AG04450 (cell line): ENCODE measurements at regions of chr5 and their contacts with region 1.

Region 1: DNA sequence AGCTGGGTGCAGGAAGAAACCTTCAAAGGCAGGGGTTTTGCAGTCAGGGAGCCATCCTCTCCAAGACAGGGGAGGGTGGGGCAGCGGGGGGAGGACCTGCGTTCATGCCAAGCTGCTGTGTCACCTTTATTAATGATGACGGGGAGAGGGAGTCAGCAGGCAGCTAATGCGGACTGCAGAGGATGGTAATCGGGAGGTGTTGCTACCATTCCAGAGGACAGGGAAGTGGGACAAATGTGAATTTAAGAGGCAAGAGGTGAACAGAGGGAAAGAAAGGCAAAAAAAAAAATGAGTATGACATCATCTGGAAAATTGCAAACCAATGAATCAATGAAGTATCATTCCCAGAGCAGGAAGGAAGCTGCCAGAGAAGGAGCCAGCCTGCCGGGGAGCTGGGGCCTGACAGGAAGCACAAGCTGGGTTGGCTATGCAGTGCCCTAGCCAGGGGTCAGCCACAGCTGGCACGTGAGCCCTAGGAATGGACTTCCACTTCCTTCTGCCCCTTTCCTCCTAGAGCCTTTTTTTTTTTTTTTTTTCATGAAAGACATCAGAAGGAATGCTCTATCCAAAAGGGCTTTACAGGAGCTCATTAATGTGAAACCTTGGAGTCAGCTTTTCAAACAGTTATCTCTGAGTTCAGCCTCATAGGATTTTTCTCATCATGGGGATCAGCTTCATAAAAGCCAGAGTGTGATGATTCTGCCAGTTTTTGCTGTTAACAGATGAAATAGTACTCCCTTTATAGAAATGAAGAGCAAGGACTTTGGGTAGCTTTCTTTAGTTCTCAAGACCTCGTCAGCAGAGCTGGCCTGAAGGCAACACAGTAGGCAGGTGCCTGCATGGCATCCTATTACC is 9.2 kb downstream of the INSYN2B start:
- DNase-seq: peak; percentile 51
- H3K4me3 ChIP-seq: no peak overlapping the region
- H3K27ac ChIP-seq: peak overlapping the region; percentile 3
- H3K27me3 ChIP-seq: no peaks in the 10 kb centered on the region
- CTCF ChIP-seq: no peak

Region 2: GRCh38 chr5:169701910-169702451 is 269.2 kb before region 1 on chr5:
- CTCF ChIA-PET with region 1: interaction called, 21 read pairs
- POLR2A ChIA-PET with region 1: interaction called, 6 read pairs
- DNase-seq: no peak
- H3K4me3 ChIP-seq: no peak overlapping the region
- H3K27ac ChIP-seq: no peak overlapping the region
- H3K27me3 ChIP-seq: no peaks in the 10 kb centered on the region
- CTCF ChIP-seq: peak; percentile 67

Region 3: GRCh38 chr5:169805527-169805934 is 165.6 kb before region 1 on chr5:
- CTCF ChIA-PET with region 1: interaction called, 4 read pairs
- POLR2A ChIA-PET with region 1: interaction called, 14 read pairs
- DNase-seq: no peak
- H3K4me3 ChIP-seq: no peak overlapping the region
- H3K27ac ChIP-seq: peak overlapping the region; percentile 93
- H3K27me3 ChIP-seq: no peaks in the 10 kb centered on the region
- CTCF ChIP-seq: no peak

Region 4: DNA sequence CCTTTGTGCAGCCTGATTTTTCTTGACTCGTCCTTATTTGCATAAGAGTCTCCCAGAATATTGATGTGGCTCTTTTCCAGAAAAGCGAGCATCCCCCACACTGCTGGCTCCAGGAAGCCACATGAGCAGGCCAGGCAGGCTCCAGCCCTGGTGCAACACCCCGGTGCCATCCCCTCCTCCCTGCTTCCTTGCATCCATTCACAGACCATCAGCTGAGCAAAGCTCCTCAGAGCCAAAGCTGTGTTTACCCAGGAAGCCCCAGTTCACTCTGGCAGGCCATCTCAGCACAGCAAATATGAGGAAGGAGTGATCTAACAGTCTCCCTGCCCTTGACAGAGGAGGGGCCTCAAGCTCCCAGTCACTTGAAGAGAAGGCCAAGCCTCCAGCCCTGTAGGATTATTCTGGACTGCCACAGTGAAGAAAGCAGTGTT is 25.3 kb before region 1 on chr5:
- CTCF ChIA-PET with region 1: interaction called, 4 read pairs
- POLR2A ChIA-PET with region 1: interaction called, 17 read pairs
- DNase-seq: peak; percentile 86
- H3K4me3 ChIP-seq: peak overlapping the region; percentile 23
- H3K27ac ChIP-seq: peak overlapping the region; percentile 96
- H3K27me3 ChIP-seq: no peaks in the 10 kb centered on the region
- CTCF ChIP-seq: no peak

Region 5: DNA sequence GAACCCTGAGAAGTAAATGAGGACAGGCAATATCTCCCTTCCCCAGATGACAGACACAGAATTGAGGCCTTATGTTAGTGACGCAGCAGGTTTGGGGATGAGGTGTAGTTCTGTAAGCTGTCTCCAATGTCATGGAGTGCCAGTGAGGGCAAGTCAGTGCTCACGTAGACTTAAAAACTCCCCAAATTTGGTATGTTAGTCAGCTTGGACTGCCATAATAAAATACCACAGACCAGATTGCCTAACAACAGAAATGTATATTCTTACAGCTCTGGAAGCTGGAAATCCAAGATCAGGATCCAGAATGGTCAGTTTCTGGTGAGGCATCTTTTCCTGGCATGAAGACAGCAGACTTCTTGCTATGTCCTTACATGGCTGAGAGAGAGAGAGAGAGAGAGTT is 149.4 kb after region 1 on chr5:
- CTCF ChIA-PET with region 1: no interaction called
- POLR2A ChIA-PET with region 1: interaction called, 10 read pairs
- DNase-seq: peak; percentile 66
- H3K4me3 ChIP-seq: no peak overlapping the region
- H3K27ac ChIP-seq: peak overlapping the region; percentile 94
- H3K27me3 ChIP-seq: no peaks in the 10 kb centered on the region
- CTCF ChIP-seq: no peak